ENCODE measurements at regions of chr12 and their contacts with region 1.

Region 1: GRCh38 chr12:70576346-70577282 is 60.6 kb downstream of the PTPRB start:
- DNase-seq: no peak
- ATAC-seq: peak in 7 of 8 donors; percentile 64 to 89 (median 77)
- H3K4me3 ChIP-seq: no peak overlapping the region
- H3K27ac ChIP-seq: peak overlapping the region in 2 of 10 donors; percentile 1 to 6
- H3K4me1 ChIP-seq: peaks cover 0 to 7% (median 0%) of the 10 kb centered on the region in 9 donors
- H3K27me3 ChIP-seq: no peaks in the 10 kb centered on the region
- CTCF ChIP-seq: peak; percentile 60 to 87 (median 83)

Region 2: DNA sequence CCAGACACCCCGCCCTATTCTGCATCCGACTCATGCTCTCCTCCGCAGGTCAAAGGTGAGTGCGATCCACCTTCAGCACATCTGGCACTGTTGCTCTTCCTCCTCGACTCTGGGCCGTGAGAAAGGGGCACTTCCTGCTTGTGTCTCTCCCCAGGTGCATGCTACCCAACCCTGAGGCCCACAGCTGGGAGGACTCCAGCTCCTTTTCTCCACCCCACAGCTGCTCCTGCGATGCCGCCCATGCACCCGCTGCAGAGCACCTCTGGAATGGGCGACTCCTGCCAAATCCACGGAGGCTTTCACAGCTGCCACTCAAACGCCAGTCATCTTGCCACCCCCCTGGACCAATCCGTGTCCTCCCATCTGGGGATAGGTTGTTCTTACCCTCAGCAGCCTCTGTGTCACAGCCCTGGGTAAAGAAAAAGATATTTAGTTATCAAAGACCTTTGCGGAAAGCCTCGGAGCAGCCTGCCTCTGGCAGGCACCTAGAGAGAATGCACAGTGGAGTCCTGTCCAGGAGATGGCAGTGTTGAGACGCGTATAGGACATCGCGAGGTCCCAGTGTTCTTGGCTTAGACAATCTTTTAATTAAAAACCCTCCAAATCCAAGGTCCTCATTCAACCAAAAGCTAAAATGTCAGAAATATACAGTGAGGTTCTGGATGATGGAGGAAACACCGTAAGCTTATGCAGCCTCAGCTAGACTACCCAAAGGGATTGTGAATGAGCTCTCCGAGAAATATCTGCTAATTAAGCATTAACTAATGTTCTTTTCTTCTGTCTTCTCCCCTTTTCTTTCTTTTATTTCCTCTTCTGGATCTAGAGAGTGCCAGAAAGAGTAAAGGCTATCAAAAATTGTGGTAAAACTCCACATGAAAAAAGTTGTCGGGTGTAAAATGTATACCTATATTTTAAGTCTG is 697.3 kb before region 1 on chr12:
- intact Hi-C with region 1: loop called in 9 of 10 experiments (anchors 1 to 10 kb)
- DNase-seq: peak; percentile 45 to 73
- ATAC-seq: peak; percentile 82 to 95 (median 94)
- H3K4me3 ChIP-seq: peak overlapping the region in 6 of 10 donors; percentile 16 to 33 (median 24)
- H3K27ac ChIP-seq: no peak overlapping the region
- H3K4me1 ChIP-seq: peaks cover 0 to 10% (median 4%) of the 10 kb centered on the region in 9 donors
- H3K27me3 ChIP-seq: no peaks in the 10 kb centered on the region
- CTCF ChIP-seq: peak; percentile 78 to 97 (median 90)

Region 3: GRCh38 chr12:69894800-69895383 is 681.7 kb before region 1 on chr12:
- intact Hi-C with region 1: loop called in 9 of 10 experiments (anchors 1 to 5 kb)
- DNase-seq: no peak
- ATAC-seq: no peak
- H3K4me3 ChIP-seq: no peak overlapping the region
- H3K27ac ChIP-seq: no peak overlapping the region
- H3K4me1 ChIP-seq: peaks cover 0 to 8% (median 0%) of the 10 kb centered on the region in 9 donors
- H3K27me3 ChIP-seq: no peaks in the 10 kb centered on the region
- CTCF ChIP-seq: no peak

Region 4: DNA sequence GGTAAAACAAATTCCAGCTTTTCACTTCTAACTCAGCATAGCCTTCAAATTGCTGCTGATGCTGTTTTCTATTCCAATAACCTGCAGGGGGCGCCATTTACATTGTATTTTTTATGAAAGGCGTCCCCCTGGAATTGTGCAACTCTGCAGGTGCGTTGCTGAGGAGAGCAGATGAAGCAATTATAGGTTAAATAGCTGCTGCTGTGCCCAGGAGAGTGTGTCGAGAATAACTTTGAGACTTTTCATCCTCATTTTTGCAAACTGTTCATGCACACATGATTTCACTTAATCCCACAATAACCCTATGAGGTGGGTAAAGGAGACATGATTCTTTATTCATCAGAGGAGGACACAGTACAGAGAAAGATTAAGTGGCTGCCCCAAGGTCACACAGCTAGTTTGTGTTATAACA is 675.9 kb before region 1 on chr12:
- intact Hi-C with region 1: loop called in 9 of 10 experiments (anchors 1 to 5 kb)
- DNase-seq: peak in 1 of 2 donors; percentile 85
- ATAC-seq: peak in 7 of 8 donors; percentile 35 to 79 (median 59)
- H3K4me3 ChIP-seq: no peak overlapping the region
- H3K27ac ChIP-seq: peak overlapping the region in 1 of 10 donors; percentile 9
- H3K4me1 ChIP-seq: peaks cover 0 to 23% (median 13%) of the 10 kb centered on the region in 9 donors
- H3K27me3 ChIP-seq: no peaks in the 10 kb centered on the region
- CTCF ChIP-seq: peak; percentile 79 to 92 (median 86)

Region 5: GRCh38 chr12:70242695-70243509 is 333.7 kb before region 1 on chr12 and contains the start of gene CNOT2:
- intact Hi-C with region 1: loop called in 2 of 10 experiments (anchors 5 to 10 kb)
- DNase-seq: peak; percentile 90 to 92
- ATAC-seq: peak; percentile 96 to 99 (median 97)
- H3K4me3 ChIP-seq: peak within 1 kb of the TSS; percentile 65 to 96 (median 88)
- H3K27ac ChIP-seq: peak within 1 kb of the TSS; percentile 89 to 99 (median 96)
- H3K4me1 ChIP-seq: peaks cover 7 to 61% (median 43%) of the 10 kb centered on the region in 9 donors
- H3K27me3 ChIP-seq: no peaks in the 10 kb centered on the region
- CTCF ChIP-seq: peak in 1 of 9 donors; percentile 14
- total RNA-seq, gene CNOT2: 29.7 to 43.0 (median 36.4) TPM

Region 6: DNA sequence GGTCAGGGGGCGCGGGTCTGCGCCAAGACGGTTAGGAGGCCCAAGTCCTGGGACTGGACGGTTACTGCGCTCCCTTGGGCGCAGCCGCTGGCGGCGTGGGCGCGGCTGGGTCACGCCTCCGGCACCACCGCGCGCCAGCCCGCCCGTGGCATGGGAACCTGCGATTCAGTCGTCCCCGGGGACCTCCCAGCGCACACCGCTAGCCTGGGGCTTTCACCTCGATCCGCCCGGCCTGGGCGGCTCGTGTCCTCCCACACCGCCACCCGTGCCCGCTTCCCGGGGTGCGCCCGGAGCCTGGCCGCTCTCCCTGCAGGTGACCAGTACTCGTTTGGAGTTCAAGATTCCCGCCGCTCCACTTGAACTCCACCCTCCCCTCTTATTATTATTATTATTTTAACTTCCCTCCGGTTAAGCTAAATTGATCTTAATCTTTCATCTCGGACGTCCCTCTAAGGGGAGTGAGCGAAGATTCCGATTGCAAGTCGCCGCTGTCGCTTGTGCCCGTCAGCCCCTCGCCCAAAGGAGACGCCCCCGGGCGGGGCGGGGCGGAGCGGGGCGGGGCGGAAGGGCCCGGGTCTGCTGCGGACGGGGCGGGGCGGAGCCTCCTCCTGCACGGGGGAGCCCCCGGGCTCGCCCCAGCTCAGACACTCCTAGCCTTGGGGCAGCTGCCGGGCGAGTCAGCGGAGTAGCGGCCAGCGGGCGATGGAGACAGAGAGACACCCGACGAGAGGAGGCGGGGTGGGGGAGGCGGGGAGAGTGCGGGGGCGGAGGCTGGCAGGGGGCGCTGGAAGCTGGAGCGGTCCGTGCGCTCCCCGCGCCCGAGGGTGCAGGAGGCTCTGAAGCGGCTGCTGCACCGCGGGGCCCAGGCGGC is 210.7 kb before region 1 on chr12 and contains the start of gene KCNMB4:
- intact Hi-C with region 1: loop called in 2 of 10 experiments (anchors 10 kb)
- DNase-seq: peak; percentile 52 to 69
- ATAC-seq: peak; percentile 83 to 96 (median 92)
- H3K4me3 ChIP-seq: peak within 1 kb of the TSS; percentile 56 to 89 (median 68)
- H3K27ac ChIP-seq: peak within 1 kb of the TSS in 9 of 10 donors; percentile 8 to 60 (median 36)
- H3K4me1 ChIP-seq: peaks cover 7 to 39% (median 20%) of the 10 kb centered on the region in 9 donors
- H3K27me3 ChIP-seq: peaks cover 0 to 65% (median 0%) of the 10 kb centered on the region in 7 donors
- CTCF ChIP-seq: no peak
- total RNA-seq, gene KCNMB4: 1.2 to 3.8 (median 1.6) TPM

Region 7: GRCh38 chr12:70535896-70536374 is 40.7 kb before region 1 on chr12:
- intact Hi-C with region 1: loop called in 1 of 10 experiments (anchors 5 kb)
- DNase-seq: peak in 1 of 2 donors; percentile 25
- ATAC-seq: peak; percentile 59 to 86 (median 72)
- H3K4me3 ChIP-seq: no peak overlapping the region
- H3K27ac ChIP-seq: peak overlapping the region; percentile 27 to 83 (median 70)
- H3K4me1 ChIP-seq: peaks cover 0 to 36% (median 5%) of the 10 kb centered on the region in 9 donors
- H3K27me3 ChIP-seq: no peaks in the 10 kb centered on the region
- CTCF ChIP-seq: no peak

Measured in heart right ventricle (tissue), 16 donors.